IMR-90 (cell line): ENCODE measurements at regions of chr11 and their contacts with region 1.

Region 1: DNA sequence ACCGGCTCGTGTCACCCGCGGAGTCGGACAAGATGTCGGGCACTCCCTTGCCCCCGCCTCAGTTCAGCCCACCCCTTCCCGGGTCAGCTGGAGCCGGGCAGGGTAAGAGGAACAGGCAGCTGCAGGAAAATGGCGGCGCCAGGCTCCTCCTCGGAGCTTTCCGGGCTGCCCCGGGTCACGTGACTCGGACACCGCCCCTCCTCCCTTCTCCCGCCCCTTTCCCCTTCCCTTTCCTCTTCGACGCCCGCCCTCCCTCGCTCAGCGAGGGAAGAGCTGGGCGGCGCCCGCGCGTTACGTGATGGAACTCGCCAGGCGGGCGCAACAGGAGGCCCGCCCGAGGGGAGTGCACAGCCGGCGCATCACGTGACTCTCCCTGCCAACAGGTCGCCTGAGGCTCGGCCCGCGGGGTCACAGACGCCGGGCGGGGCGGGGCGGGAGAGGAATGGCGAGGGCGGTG is at the start of gene PICALM:
- DNase-seq: peak; percentile 99
- ATAC-seq: peak; percentile 93
- H3K4me3 ChIP-seq: peak within 1 kb of the TSS; percentile 96
- H3K27ac ChIP-seq: peak within 1 kb of the TSS; percentile 98
- H3K4me1 ChIP-seq: peaks cover 8% of the 10 kb centered on the region
- H3K27me3 ChIP-seq: no peaks in the 10 kb centered on the region
- CTCF ChIP-seq: 0 out of 2 replicates have a peak, but pooled peaks have one; percentile 10
- POLR2A ChIP-seq: peak; percentile 70
- RAD21 ChIP-seq: peak; percentile 29
- total RNA-seq, gene PICALM: 441 and 453 TPM in 2 replicates

Region 2: GRCh38 chr11:85974122-85974521 is 94.9 kb before region 1 on chr11:
- CTCF ChIA-PET with region 1: no interaction called
- POLR2A ChIA-PET with region 1: no interaction called
- dilution Hi-C with region 1: no loop called
- in situ Hi-C with region 1: no loop called
- intact Hi-C with region 1: no loop called
- DNase-seq: peak; percentile 48
- ATAC-seq: no peak
- H3K4me3 ChIP-seq: no peak overlapping the region
- H3K27ac ChIP-seq: no peak overlapping the region; the same call in 1 of the 2 replicates
- H3K4me1 ChIP-seq: peaks cover 2% of the 10 kb centered on the region
- H3K27me3 ChIP-seq: no peaks in the 10 kb centered on the region
- CTCF ChIP-seq: no peak
- POLR2A ChIP-seq: no peak
- RAD21 ChIP-seq: no peak

Region 3: GRCh38 chr11:86041975-86042378 is 27.0 kb before region 1 on chr11:
- CTCF ChIA-PET with region 1: interaction called, 6 read pairs
- POLR2A ChIA-PET with region 1: no interaction called
- dilution Hi-C with region 1: no loop called
- in situ Hi-C with region 1: no loop called
- intact Hi-C with region 1: loop called (anchors 2 kb)
- DNase-seq: peak; percentile 94
- ATAC-seq: peak; percentile 89
- H3K4me3 ChIP-seq: no peak overlapping the region
- H3K27ac ChIP-seq: no peak overlapping the region
- H3K4me1 ChIP-seq: peaks cover 13% of the 10 kb centered on the region
- H3K27me3 ChIP-seq: no peaks in the 10 kb centered on the region
- CTCF ChIP-seq: peak; percentile 94
- POLR2A ChIP-seq: no peak
- RAD21 ChIP-seq: peak; percentile 90

Region 4: DNA sequence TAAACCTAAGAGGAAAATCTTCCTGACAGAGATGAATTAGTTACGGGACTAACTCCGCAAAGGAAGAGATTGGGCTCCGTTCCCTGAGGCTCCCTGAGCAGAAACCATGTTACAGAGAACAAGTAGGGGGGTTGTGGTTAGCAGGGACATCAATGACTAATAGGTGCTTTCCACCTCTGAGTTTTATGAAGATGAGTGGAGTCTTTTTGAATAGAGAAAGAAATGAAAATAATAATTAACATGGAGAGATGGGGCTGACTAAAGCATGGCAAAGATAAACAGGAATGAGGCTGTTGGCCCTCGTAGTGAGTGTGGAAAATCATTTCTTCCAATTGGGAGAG is 47.4 kb after region 1 on chr11:
- CTCF ChIA-PET with region 1: no interaction called
- POLR2A ChIA-PET with region 1: no interaction called
- dilution Hi-C with region 1: no loop called
- in situ Hi-C with region 1: no loop called
- intact Hi-C with region 1: loop called (anchors 2 kb)
- DNase-seq: peak; percentile 98
- ATAC-seq: peak; percentile 80
- H3K4me3 ChIP-seq: no peak overlapping the region; the same call in 1 of the 2 replicates
- H3K27ac ChIP-seq: peak overlapping the region; percentile 59; the same call in 1 of the 2 replicates
- H3K4me1 ChIP-seq: peaks cover 9% of the 10 kb centered on the region
- H3K27me3 ChIP-seq: no peaks in the 10 kb centered on the region
- CTCF ChIP-seq: no peak
- POLR2A ChIP-seq: peak; percentile 30; the same call in 1 of the 2 replicates
- RAD21 ChIP-seq: no peak

Region 5: DNA sequence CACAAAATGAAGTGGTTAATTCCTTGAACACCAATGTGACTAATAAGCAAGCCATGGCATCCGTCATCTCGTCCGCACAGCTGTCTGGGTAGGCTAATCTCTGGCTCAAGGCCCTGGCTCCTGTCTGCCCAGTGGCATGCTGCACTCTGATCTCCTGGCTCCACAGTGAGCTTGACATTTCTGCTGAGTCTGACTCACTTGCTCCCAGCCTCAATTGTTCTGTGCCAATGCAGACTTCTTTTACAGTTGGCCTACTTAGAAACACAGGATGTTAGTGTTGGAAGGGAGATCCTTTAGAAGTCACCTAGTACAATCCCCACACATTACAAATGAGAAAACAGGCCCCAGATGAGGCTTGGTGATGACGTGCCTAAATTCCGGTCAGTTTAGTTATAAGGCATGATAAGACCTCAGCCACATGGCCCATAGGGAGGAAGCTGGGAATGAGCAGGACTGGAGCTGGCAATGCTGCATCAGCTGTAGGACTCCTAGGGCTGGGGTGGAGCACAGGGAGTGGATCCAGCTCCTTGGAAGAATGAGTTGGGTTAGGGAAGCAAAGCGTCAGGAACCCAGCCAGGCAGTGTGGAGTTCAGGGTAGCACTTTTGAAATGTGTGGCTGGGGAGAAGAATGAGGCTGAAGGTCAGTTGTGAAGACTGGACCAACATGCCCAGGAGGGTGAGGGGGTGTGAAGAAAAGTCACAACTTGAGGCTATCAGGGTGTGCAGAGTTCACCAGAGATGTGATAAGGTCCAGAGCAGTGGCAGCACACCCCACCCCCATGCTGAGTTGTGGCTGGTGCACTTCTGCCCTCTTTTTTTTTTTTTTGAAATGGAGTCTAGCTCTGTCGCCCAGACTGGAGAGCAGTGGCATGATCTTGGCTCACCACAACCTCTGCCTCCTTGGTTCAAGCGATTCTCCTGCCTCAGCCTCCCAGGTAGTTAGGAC is 105.4 kb after region 1 on chr11:
- CTCF ChIA-PET with region 1: no interaction called
- POLR2A ChIA-PET with region 1: interaction called, 3 read pairs
- dilution Hi-C with region 1: no loop called
- in situ Hi-C with region 1: no loop called
- intact Hi-C with region 1: loop called (anchors 1 kb)
- DNase-seq: peak; percentile 99
- ATAC-seq: peak; percentile 83
- H3K4me3 ChIP-seq: no peak overlapping the region
- H3K27ac ChIP-seq: peak overlapping the region; percentile 81
- H3K4me1 ChIP-seq: peaks cover 22% of the 10 kb centered on the region
- H3K27me3 ChIP-seq: no peaks in the 10 kb centered on the region
- CTCF ChIP-seq: no peak
- POLR2A ChIP-seq: peak; percentile 76; the same call in 1 of the 2 replicates
- RAD21 ChIP-seq: no peak; the same call in none of the 2 replicates

Region 6: GRCh38 chr11:86179646-86180064 is 110.7 kb after region 1 on chr11:
- CTCF ChIA-PET with region 1: no interaction called
- POLR2A ChIA-PET with region 1: interaction called, 3 read pairs
- dilution Hi-C with region 1: no loop called
- in situ Hi-C with region 1: no loop called
- intact Hi-C with region 1: loop called (anchors 1 kb)
- DNase-seq: no peak
- ATAC-seq: no peak
- H3K4me3 ChIP-seq: no peak overlapping the region
- H3K27ac ChIP-seq: no peak overlapping the region
- H3K4me1 ChIP-seq: peaks cover 21% of the 10 kb centered on the region
- H3K27me3 ChIP-seq: no peaks in the 10 kb centered on the region
- CTCF ChIP-seq: no peak
- POLR2A ChIP-seq: no peak
- RAD21 ChIP-seq: no peak

Region 7: DNA sequence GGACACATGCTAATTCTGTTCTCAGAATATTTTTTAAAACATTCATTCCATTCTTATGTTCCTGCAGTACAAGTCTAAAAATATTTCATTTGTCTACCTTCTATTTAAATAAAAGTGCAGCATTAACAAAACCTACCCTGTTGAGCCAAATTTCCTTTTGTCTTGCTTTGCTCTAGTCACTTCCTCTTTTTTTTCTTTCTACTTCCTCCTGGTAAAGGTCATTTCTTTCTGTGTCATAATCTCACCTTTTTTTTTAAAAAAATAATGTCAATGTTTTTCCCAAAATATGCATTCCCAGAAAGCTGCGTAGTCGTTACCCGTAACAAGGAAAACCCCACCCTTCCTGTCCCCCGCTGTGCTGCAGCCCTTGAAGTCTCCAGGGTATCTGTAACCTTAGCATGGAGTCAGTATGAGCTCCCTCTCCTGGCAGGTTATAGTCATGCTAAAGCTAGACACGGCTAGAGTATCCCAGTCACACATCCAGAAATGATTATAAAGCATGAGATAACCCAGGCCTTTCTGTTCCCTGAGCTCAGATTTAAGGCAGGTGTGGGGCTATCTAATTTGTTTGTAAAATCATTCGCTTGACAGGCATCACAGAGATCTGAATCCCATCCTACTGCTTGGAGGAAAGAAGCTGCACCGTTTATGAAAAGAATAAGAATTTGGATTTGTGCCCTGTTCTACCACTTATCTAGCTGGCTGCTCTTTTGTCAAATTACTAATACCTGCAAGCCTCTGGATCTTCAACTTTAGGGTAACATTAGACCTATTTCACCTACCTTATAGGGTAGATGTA is 124.5 kb after region 1 on chr11:
- CTCF ChIA-PET with region 1: interaction called, 9 read pairs
- POLR2A ChIA-PET with region 1: interaction called, 5 read pairs
- dilution Hi-C with region 1: no loop called
- in situ Hi-C with region 1: no loop called
- intact Hi-C with region 1: loop called (anchors 1 kb)
- DNase-seq: peak; percentile 80
- ATAC-seq: peak; percentile 99
- H3K4me3 ChIP-seq: peak overlapping the region; percentile 11; the same call in 1 of the 2 replicates
- H3K27ac ChIP-seq: no peak overlapping the region
- H3K4me1 ChIP-seq: peaks cover 5% of the 10 kb centered on the region; the same call in 1 of the 2 replicates
- H3K27me3 ChIP-seq: no peaks in the 10 kb centered on the region
- CTCF ChIP-seq: peak; percentile 76
- POLR2A ChIP-seq: no peak
- RAD21 ChIP-seq: peak; percentile 82

Region 8: GRCh38 chr11:86244522-86245368 is 175.8 kb after region 1 on chr11 and contains the start of gene EED:
- CTCF ChIA-PET with region 1: no interaction called
- POLR2A ChIA-PET with region 1: no interaction called
- dilution Hi-C with region 1: no loop called
- in situ Hi-C with region 1: no loop called
- intact Hi-C with region 1: loop called (anchors 2 kb)
- DNase-seq: peak; percentile 94
- ATAC-seq: peak; percentile 95
- H3K4me3 ChIP-seq: peak within 1 kb of the TSS; percentile 73
- H3K27ac ChIP-seq: peak within 1 kb of the TSS; percentile 96
- H3K4me1 ChIP-seq: no peaks in the 10 kb centered on the region
- H3K27me3 ChIP-seq: peaks cover 5% of the 10 kb centered on the region; the same call in 1 of the 2 replicates
- CTCF ChIP-seq: no peak
- POLR2A ChIP-seq: peak; percentile 95
- RAD21 ChIP-seq: no peak
- total RNA-seq, gene EED: 11.1 and 20.3 TPM in 2 replicates

Region 9: GRCh38 chr11:86274503-86274902 is 205.5 kb after region 1 on chr11:
- CTCF ChIA-PET with region 1: no interaction called
- POLR2A ChIA-PET with region 1: no interaction called
- dilution Hi-C with region 1: no loop called
- in situ Hi-C with region 1: no loop called
- intact Hi-C with region 1: no loop called
- DNase-seq: no peak
- ATAC-seq: no peak
- H3K4me3 ChIP-seq: no peak overlapping the region
- H3K27ac ChIP-seq: no peak overlapping the region
- H3K4me1 ChIP-seq: peaks cover 3% of the 10 kb centered on the region; the same call in 1 of the 2 replicates
- H3K27me3 ChIP-seq: no peaks in the 10 kb centered on the region
- CTCF ChIP-seq: 0 out of 2 replicates have a peak, but pooled peaks have one; percentile 2
- POLR2A ChIP-seq: no peak
- RAD21 ChIP-seq: no peak

Region 10: DNA sequence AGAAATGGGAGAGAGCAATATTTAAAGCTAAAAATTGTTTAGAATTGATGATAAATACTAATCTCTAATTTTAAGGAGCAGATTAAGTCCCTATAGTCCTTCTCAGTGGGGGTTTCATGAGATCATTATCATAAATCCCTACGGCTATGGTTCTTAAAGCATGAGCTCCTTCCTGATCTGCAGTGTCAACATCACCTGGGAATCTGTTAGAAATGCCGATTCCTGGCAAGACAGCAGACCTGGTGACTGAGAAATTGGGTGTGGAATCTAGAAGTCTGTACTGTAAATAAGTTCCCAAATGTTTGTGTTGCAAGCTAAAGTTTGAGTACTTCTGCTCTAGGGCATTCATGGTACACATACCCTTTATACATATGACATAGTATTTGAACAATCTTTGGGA is 245.7 kb after region 1 on chr11:
- CTCF ChIA-PET with region 1: no interaction called
- POLR2A ChIA-PET with region 1: no interaction called
- dilution Hi-C with region 1: no loop called
- in situ Hi-C with region 1: no loop called
- intact Hi-C with region 1: no loop called
- DNase-seq: no peak
- ATAC-seq: no peak
- H3K4me3 ChIP-seq: no peak overlapping the region
- H3K27ac ChIP-seq: no peak overlapping the region
- H3K4me1 ChIP-seq: no peaks in the 10 kb centered on the region
- H3K27me3 ChIP-seq: no peaks in the 10 kb centered on the region
- CTCF ChIP-seq: no peak
- POLR2A ChIP-seq: no peak
- RAD21 ChIP-seq: no peak